Left cardiac atrium (tissue), 4 donors: ENCODE measurements at regions of chr6 and their contacts with region 1.

Region 1: GRCh38 chr6:2634139-2634964 is 116.4 kb downstream of the MYLK4 start:
- DNase-seq: peak; percentile 94
- ATAC-seq: peak; percentile 94

Region 2: DNA sequence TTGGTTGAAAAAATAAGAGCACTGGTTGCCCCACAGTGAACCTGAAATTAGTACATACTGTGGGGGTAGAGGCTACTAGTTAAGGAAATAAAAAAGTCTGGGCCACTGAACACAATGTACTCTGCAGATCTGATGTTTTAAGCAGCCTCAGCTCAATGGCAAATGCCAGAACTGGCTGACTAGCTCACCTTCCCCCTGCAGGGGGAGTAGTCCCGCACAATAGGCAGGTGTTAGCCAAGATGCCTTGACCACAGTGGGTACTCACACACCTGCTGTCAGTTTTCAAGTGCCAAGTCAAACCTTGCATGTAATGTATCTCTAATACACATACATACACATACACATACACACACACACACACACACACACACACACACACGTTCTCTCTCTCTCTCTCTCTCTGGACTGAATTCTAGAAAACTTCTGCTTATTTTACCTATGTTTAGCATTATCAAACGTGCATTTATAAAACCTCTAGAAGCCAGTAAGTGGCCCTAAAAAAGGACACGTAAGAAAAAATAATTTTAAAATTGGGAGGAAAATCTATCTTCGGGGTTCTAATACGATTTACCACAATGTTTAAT is 425.0 kb before region 1 on chr6:
- intact Hi-C with region 1: loop called in 1 of 2 experiments (anchors 10 kb)
- DNase-seq: no peak
- ATAC-seq: peak in 1 of 2 donors; percentile 44

Region 3: DNA sequence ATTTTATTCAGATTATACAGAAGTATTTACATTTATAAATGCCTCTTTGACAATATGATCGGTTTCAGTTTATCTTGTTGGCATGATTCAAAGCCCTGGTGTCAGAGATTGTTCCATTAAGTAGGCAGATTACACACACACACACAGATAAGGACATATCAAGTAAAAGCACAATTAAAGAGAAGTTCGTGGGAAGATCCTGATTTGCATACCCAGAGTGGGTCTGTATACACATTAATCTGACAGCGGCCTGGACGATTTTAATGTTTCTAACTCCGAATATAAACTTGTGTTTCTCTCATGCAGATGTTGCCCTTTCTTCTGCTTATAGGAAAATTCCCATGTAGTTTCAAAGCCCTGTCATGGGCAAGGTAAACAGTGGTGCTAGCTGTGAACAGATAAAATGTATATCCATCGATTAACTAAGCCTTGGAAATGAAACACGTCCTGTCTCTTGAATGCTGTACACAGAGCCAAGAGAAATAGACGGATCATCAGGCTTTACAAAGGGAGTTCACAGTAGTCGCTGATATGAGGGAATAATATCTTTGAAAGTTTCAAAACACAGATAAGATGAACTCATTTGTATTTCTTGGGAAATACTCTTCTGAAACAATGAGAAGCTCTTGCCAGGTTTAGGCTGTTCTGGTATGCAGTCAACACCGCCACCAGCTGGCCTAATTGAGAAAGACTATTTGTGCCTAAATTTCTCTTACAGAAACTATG is 280.8 kb before region 1 on chr6:
- intact Hi-C with region 1: loop called in 1 of 2 experiments (anchors 10 kb)
- DNase-seq: peak; percentile 71
- ATAC-seq: peak; percentile 76 to 87

Region 4: DNA sequence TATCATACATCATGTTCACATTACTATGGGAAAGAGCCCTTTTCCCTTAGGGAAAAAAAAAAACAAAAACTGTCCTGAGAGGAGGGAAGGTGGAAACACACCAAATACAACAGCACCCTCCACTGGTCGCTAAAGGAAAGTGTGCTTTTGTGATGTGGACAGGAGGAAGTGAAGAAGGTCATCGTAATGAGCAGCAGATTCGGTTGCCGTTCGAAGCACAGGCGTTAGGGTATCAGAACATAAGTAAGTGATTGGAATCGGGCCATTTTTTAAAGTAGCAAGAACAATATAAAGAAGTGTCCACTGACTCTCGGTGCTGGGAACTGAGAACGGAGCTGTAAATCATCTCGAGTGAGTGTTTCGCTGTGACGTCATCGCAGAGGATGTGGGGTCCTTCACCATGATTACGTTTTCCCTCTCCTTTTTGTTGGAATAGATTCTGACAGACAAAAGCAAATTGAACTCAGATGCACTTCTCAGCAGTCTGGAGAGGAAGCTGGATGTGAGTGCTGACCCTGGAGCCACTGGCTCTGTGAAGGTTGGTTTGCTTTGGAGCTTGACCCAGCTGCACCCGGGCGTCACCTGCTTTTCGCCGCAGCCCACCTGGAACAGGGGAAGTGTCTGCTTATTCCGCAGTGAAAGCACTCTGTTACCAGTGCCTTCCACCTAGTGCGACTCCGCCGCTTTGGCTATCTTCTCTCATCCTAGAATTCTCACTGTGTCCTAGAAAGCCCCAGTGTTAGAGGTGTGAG is 185.4 kb before region 1 on chr6:
- intact Hi-C with region 1: loop called in 1 of 2 experiments (anchors 10 kb)
- DNase-seq: no peak
- ATAC-seq: peak; percentile 52 to 77

Region 5: DNA sequence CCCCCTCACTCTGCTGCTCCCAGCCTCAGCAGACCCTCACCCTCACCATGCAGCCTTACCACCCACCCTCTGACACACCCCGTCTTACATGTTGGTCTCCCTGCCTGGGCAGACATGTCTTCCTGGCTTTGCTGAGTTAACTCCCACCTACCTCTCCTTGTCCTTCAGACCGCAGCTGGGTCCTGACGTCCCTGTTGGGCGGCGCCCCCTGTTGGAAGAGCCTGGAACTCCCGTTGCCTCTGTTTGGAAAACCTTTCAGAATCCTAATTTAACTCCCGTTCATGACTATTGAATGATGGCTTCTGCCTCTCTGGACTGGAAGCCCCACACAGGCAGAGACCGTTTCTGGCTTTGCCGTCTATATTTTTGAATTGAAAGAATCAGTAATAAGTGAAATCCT is 128.7 kb before region 1 on chr6:
- intact Hi-C with region 1: loop called in 1 of 2 experiments (anchors 2 kb)
- DNase-seq: no peak
- ATAC-seq: no peak